ENCODE measurements at regions of chr13 and their contacts with region 1.

Region 1: GRCh38 chr13:110915057-110915873 is at the start of gene ANKRD10:
- DNase-seq: peak; percentile 96 to 99 (median 97)
- H3K4me3 ChIP-seq: peak within 1 kb of the TSS; percentile 69 to 100 (median 93)
- H3K27ac ChIP-seq: peak within 1 kb of the TSS; percentile 93 to 100 (median 98)
- H3K27me3 ChIP-seq: no peaks in the 10 kb centered on the region
- CTCF ChIP-seq: peak; percentile 76 to 98 (median 91)
- total RNA-seq, gene ANKRD10: 107 to 197 (median 145) TPM

Region 2: DNA sequence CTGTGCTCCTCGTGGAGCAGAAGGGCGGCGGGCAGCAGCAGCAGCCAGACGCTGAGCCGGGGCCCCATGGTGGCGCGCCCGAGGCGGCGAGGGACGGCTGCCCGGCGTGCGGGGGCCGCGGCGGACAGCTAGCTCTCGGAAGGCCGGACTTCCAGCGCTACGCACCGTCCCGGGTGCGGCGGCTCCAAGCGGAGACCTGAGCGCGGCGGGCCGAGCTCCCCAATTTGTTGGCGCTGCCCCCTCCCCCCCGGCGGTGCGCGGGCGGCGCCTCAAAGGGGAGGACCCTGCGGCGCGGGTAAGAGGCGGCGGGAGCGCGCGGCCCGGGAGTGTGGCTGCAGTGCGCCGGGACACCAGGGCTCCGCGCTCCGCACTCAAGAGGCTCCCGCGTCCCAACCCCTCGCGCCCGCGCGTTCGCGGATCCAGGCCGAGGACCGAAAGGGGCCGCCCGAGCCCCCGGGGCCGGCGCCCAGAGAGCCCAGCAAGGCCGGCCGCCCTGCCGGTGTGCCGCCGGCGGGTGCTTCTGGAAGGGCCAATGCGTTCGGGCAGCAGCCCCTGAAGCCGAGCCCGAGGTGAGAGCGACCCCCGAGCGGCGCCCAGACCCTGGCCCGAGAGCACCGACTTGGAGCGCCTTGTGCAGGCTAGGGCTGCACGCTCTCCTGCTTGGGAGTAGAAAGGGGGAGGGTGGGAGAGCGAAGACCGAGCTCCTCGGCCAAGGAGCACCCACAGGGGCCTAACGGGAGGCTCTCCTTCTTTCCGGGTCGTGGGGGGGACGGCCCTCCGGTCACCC is 608.1 kb before region 1 on chr13 and contains the starts of genes COL4A1 and COL4A2:
- intact Hi-C with region 1: no loop called
- DNase-seq: peak in 3 of 10 donors; percentile 45 to 61 (median 60)
- H3K4me3 ChIP-seq: peak within 1 kb of the TSS; percentile 38 to 82 (median 69)
- H3K27ac ChIP-seq: peak within 1 kb of the TSS in 56 of 59 donors; percentile 1 to 92 (median 74)
- H3K27me3 ChIP-seq: peaks cover 0 to 74% (median 31%) of the 10 kb centered on the region in 45 donors
- CTCF ChIP-seq: no peak
- total RNA-seq, gene COL4A1: 7.5 to 122 (median 19.9) TPM
- total RNA-seq, gene COL4A2: 12.9 to 107 (median 31.0) TPM

Region 3: GRCh38 chr13:110615322-110616102 is 299.8 kb before region 1 on chr13 and contains the start of gene NAXD:
- intact Hi-C with region 1: loop called (anchors 10 kb)
- DNase-seq: peak; percentile 92 to 98 (median 96)
- H3K4me3 ChIP-seq: peak within 1 kb of the TSS; percentile 66 to 98 (median 91)
- H3K27ac ChIP-seq: peak within 1 kb of the TSS; percentile 10 to 97 (median 90)
- H3K27me3 ChIP-seq: peaks cover 0 to 6% (median 0%) of the 10 kb centered on the region in 45 donors
- CTCF ChIP-seq: peak in 32 of 56 donors; percentile 5 to 54 (median 26)
- total RNA-seq, gene NAXD: 39.9 to 64.4 (median 50.7) TPM

Region 4: DNA sequence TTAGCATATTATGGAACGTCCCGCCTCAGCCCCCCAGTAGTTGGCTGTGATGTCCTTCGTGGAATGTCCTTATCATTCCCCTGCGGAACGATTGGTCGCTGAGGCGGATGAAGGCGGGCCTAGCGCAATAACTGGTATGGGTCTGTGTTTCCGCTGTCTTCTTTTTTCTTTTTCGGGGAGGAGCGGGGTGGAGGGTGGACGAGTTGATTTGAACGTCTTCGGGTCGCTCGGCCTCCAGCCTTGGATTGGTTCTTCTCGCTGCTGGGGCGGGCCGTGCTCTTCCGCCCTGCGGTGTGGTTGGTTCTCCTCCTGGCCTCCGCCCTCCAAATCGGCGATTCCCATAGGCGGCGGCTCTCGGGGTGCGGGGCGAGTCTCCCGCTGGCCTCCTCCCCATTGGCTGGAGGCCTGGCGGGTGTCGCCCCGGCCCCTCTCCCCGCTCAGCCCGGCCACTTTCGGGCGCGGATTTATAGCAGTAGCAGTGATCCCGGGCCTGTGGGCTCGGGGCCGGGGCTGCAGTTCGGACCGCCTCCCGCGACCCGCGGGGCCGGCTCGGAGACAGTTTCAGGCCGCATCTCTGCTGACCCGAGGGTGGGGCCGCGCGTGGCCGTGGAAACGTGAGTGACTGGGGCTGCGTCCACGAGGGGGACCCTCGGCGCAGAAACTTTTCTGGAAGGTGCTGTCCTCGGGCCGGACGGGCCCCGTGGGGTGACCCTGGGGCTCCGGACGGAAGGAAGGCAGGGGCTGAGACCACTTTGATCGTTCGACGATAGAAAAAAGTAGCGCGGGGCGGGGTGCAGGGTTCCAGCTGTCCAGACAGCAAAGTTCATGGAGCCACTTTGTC is 199.7 kb before region 1 on chr13:
- intact Hi-C with region 1: loop called (anchors 2 kb)
- DNase-seq: peak; percentile 90 to 100 (median 99)
- H3K4me3 ChIP-seq: peak overlapping the region; percentile 76 to 100 (median 98)
- H3K27ac ChIP-seq: peak overlapping the region; percentile 92 to 100 (median 99)
- H3K27me3 ChIP-seq: no peaks in the 10 kb centered on the region
- CTCF ChIP-seq: peak in 37 of 56 donors; percentile 6 to 55 (median 26)

Region 5: DNA sequence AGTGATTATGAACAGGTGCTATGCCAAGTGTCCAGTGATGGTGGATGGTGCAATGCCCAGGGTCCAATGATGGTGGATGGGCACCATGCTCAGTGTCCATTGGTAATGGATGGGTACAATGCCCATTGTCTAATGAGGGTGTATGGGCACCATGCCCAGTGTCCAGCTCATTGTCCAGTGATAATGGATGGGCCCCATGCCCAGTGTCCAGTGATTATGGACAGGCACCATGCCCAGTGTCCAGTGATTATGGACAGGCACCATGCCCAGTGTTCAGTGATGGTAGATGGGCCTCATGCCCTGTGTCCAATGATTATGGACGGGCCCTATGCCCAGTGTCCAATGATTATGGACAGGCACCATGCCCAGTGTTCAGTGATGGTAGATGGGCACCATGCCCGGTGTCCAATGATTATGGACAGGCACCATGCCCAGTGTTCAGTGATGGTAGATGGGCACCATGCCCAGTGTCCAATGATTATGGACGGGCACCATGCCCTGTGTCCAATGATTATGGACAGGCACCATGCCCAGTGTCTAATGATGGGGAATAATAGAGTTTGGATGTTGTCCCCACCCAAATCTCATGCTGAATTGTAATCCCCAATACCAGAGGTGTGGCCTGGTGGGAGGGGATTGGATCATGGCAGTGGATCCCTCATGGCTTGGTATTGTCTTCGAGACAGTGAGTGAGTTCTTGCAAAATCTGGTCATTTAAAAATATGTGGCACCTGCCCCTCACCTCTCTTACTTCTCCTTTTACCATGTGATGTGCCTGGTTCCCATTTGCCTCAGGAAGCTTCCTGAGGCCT is 88.2 kb before region 1 on chr13:
- intact Hi-C with region 1: no loop called
- DNase-seq: peak in 4 of 10 donors; percentile 14 to 69 (median 51)
- H3K4me3 ChIP-seq: no peak overlapping the region
- H3K27ac ChIP-seq: no peak overlapping the region
- H3K27me3 ChIP-seq: no peaks in the 10 kb centered on the region
- CTCF ChIP-seq: no peak

Region 6: DNA sequence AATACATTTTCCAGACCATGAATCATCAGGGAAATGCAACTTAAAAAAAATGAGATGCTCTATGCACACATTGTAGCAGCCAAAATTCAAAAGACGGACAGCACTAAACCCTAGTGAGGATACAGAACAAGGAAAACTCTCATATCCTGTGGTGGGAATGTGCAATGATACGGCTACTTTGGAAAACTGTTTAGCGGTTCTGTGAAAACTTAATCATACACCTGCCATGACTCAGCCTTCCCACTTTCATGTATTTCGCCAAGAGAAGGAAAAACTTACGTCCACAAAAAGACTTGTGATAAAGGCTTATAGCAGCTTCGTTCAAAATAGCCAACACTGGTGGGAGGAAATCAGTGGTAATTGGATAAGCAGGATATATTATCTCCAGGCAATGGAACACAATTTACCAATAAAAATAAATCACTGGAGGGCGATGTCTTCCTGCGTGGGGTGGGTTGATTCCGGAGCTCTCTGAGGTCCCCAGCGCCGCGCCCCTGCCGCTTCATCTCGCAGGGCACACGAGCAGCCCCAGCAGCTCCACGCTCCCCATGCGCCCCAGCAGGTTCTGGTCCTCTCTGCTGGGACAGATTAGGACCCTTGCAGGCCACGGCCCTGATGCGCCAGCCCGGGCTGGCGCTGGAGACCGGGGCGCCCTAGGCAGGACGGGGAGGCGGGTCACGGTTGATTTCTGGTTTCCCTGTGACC is 102.6 kb after region 1 on chr13:
- intact Hi-C with region 1: no loop called
- DNase-seq: no peak
- H3K4me3 ChIP-seq: no peak overlapping the region
- H3K27ac ChIP-seq: no peak overlapping the region
- H3K27me3 ChIP-seq: peaks cover 0 to 3% (median 0%) of the 10 kb centered on the region in 45 donors
- CTCF ChIP-seq: no peak

Region 7: DNA sequence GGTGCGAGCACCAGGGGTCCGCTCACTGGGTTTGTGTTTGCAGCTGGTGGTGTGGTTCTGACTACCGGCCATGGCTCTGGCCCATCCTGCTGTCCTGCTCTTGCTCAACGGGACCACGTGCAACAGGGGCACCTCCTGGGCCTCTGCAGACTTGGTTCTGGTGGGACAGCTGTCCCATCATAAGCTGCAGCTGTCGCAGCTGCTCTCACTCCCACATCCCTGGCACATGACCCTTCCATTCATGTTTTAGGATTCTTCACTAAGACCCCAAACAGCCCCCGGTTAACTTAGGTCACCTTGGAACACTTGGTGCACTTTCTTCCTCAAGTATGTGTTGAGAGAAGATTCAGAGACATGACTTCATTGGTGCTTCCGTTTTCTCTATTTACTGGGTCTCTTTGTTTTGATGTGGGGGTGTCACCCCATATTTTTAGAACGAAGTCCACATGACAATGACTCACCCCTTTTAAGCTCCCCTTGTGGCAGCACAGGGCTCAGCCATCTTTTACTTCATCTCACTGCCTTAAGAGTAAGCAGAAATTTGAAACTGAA is 131.4 kb after region 1 on chr13:
- intact Hi-C with region 1: loop called (anchors 1 to 5 kb)
- DNase-seq: no peak
- H3K4me3 ChIP-seq: no peak overlapping the region
- H3K27ac ChIP-seq: peak overlapping the region in 7 of 59 donors; percentile 11 to 42 (median 28)
- H3K27me3 ChIP-seq: no peaks in the 10 kb centered on the region
- CTCF ChIP-seq: peak in 10 of 56 donors; percentile 8 to 20 (median 14)

Region 8: GRCh38 chr13:111153279-111153976 is 238.2 kb after region 1 on chr13:
- intact Hi-C with region 1: loop called (anchors 5 to 10 kb)
- DNase-seq: peak; percentile 88 to 96 (median 92)
- H3K4me3 ChIP-seq: peak overlapping the region; percentile 56 to 99 (median 90)
- H3K27ac ChIP-seq: peak overlapping the region; percentile 78 to 99 (median 96)
- H3K27me3 ChIP-seq: no peaks in the 10 kb centered on the region
- CTCF ChIP-seq: peak in 53 of 56 donors; percentile 4 to 72 (median 46)

Region 9: GRCh38 chr13:111216166-111216960 is 301.1 kb after region 1 on chr13:
- intact Hi-C with region 1: loop called in 1 of 2 experiments (anchors 10 kb)
- DNase-seq: peak in 6 of 10 donors; percentile 47 to 70 (median 60)
- H3K4me3 ChIP-seq: peak overlapping the region in 4 of 59 donors; percentile 1 to 28 (median 14)
- H3K27ac ChIP-seq: peak overlapping the region in 46 of 59 donors; percentile 16 to 93 (median 62)
- H3K27me3 ChIP-seq: no peaks in the 10 kb centered on the region
- CTCF ChIP-seq: peak in 52 of 56 donors; percentile 23 to 73 (median 50)

Region 10: GRCh38 chr13:111449041-111449440 is 533.8 kb after region 1 on chr13:
- intact Hi-C with region 1: loop called in 1 of 2 experiments (anchors 10 kb)
- DNase-seq: peak in 3 of 10 donors; percentile 55 to 68 (median 56)
- H3K4me3 ChIP-seq: no peak overlapping the region
- H3K27ac ChIP-seq: peak overlapping the region in 4 of 59 donors; percentile 29 to 88 (median 55)
- H3K27me3 ChIP-seq: peaks cover 0 to 20% (median 0%) of the 10 kb centered on the region in 45 donors
- CTCF ChIP-seq: no peak

Measured in dorsolateral prefrontal cortex (tissue), 120 donors.